Gastrocnemius medialis (tissue), 4 donors: ENCODE measurements at regions of chr19 and their contacts with region 1.

Region 1: DNA sequence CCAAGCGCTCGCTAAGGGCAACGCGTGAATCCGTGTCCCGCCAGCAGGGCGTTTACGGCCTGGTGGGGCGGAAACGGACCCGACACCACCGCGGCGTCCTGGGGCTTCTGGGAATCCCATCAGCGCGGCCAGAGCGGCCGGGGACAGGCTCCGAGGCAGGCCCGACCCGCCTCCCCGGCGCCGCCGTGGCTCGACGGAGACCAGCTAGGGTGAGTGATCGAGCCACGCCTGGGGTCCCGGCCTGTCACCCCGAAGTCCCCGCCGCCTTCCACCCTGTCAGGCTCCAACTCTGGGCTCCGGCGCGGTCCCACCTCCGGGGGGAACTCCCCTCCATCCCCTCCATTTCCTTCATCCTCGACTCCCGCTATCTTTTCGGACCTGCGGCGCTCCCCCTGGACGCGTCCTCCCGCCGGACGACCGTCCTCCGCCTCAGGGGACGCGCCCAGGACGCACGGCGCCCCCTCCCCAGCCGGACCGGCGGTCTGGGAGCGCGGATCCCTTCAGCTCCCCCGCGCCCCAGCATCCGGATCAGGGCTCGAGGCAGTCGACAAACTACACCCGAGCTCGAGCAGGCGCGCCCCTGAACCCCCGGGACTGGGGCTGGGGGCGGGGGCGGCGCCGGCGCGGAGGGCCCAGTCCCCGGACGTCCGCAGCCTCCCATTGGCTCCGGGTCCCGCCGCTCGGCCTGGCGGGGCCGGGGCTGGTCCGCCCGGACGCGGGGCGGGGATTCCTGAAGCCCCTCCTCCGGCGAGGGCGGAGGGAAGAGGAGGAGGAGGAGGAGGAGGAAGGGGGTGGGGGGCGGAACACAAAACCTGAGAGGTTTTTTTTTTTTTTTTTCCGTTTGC is 638 bp upstream of the BICRA start:
- DNase-seq: peak; percentile 90 to 94
- ATAC-seq: peak; percentile 80 to 83
- H3K4me3 ChIP-seq: peak overlapping the region; percentile 77 to 100 (median 96)
- H3K27ac ChIP-seq: peak overlapping the region; percentile 92 to 100 (median 99)
- H3K4me1 ChIP-seq: peaks cover 33 to 41% of the 10 kb centered on the region in 2 donors
- H3K27me3 ChIP-seq: no peaks in the 10 kb centered on the region
- CTCF ChIP-seq: peak; percentile 31 to 59 (median 48)
- POLR2A ChIP-seq: peak; percentile 93 to 96

Region 2: GRCh38 chr19:47521473-47522180 is 86.7 kb before region 1 on chr19:
- in situ Hi-C with region 1: no loop called
- intact Hi-C with region 1: no loop called
- DNase-seq: no peak
- ATAC-seq: no peak
- H3K4me3 ChIP-seq: no peak overlapping the region
- H3K27ac ChIP-seq: peak overlapping the region in 2 of 4 donors; percentile 41 to 46
- H3K4me1 ChIP-seq: peaks cover 6 to 9% of the 10 kb centered on the region in 2 donors
- H3K27me3 ChIP-seq: no peaks in the 10 kb centered on the region
- CTCF ChIP-seq: no peak
- POLR2A ChIP-seq: no peak

Region 3: DNA sequence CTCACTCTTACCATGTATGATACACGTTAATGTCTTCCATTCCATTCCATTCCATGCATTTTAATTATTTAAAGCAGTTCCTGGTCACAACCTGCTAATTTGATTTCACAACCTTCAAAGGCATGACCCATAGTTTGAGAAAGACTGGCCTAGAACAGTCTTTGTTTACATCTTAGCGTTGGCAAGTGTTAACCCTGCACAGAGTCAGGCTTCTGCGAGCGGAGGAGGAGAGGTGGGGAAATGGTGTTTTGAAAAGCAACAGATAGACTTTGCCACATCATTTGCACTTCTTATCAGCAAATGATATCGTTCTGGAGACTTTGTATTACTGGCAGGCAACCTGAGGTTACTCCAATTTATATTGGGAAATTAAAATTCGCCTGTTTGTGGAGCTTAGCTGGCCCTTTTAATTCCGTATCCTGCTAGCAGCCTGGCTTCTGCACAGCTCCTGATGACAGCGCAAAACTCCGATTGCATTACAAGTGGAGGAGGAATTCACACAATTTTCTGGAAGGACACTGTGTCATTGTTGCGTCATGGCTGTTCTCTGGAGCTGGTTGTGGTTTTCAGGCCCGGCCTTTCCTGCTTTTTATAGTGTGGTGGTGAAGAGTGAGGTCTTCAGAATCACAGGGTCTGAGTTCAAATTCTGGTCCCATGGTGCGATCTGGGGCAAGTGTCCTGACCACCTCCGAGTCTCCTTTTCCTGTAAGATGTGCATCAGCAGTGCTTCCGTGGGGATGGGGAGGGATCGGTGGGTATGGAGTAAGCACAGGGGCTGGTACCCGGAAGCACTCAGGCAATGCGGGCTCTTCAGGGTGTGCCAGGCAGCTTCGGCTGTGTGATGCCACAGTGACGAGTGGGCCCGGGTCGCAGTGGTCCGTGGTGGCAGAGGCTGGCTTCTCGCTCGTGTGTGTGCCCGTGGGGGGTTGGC is 55.8 kb after region 1 on chr19:
- in situ Hi-C with region 1: no loop called
- intact Hi-C with region 1: loop called (anchors 2 kb)
- DNase-seq: peak; percentile 92 to 93
- ATAC-seq: peak; percentile 73 to 78
- H3K4me3 ChIP-seq: peak overlapping the region; percentile 9 to 39 (median 26)
- H3K27ac ChIP-seq: peak overlapping the region; percentile 88 to 99 (median 93)
- H3K4me1 ChIP-seq: peaks cover 73 to 89% of the 10 kb centered on the region in 2 donors
- H3K27me3 ChIP-seq: no peaks in the 10 kb centered on the region
- CTCF ChIP-seq: no peak
- POLR2A ChIP-seq: peak; percentile 50 to 54

Region 4: GRCh38 chr19:47778089-47778953 is 170.0 kb after region 1 on chr19 and contains the start of gene SELENOW:
- in situ Hi-C with region 1: no loop called
- intact Hi-C with region 1: loop called (anchors 5 kb)
- DNase-seq: peak; percentile 48 to 81
- ATAC-seq: peak; percentile 61 to 68
- H3K4me3 ChIP-seq: peak within 1 kb of the TSS; percentile 74 to 98 (median 90)
- H3K27ac ChIP-seq: peak within 1 kb of the TSS; percentile 93 to 99 (median 95)
- H3K4me1 ChIP-seq: peaks cover 38 to 41% of the 10 kb centered on the region in 2 donors
- H3K27me3 ChIP-seq: no peaks in the 10 kb centered on the region
- CTCF ChIP-seq: peak in 1 of 5 experiments; percentile 19
- POLR2A ChIP-seq: peak; percentile 96 to 98
- total RNA-seq, gene SELENOW: 730 to 1,512 (median 1,402) TPM